Cardiac septum (tissue), 1 donor: ENCODE measurements at regions of chr15 and their contacts with region 1.

Region 1: DNA sequence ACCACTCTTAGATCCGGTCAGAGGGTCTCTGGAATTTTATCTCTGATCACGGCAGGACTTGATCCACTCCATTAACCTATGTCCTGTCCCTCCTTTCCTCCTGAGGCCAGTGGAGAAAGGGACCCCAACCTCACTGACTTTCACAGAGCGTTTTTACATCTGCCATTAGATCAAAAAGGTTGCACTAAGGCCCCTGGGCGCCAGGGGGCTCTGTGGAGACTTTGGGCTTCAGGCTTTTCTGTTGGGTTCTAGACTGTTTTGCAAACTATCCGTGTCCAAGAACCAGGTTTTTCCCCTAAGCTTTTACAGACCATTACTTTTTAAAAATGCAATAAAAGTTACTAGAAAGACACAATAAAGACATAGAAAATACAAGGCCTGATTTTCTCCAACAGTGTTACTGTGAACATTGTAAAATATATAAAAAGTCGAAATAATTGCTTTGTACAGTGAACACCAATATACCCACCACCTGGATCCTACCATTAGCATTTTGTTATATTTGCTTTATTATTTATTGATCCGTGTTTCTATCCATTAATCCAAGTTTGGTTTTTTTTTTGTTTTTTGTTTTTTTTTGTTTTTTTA is 159.7 kb downstream of the POLR2M start:
- DNase-seq: no peak

Region 2: DNA sequence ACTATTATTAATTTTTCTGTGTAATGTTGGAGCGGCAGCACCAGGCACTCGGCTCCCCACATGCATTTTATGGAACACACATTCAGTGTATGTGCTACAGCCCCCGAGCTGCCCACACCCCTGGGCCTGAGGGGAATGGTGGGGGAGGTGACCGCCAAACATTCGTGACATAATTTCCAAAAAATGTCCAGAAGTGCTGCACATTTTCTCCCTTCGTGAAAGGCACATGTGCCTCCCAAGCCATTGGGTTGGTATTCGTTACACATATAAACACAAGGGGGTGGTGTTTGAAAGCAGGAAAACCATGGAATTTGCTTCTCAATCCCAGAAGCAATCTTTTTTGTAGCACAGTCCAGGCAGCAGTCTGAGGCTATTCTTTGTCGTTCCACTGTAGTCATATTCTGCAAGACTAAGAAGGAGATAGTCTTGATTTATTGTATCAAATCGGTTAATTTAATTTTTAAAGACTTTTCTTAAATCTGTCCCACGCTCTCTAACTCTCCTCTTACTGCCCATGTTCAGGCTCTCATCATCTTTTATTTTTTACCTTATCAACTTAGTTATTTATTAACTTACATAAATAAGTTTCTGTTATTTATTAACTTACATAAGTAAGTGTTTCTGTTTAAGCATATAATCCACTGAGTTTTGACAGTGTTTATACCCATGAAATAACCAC is 198.9 kb before region 1 on chr15:
- intact Hi-C with region 1: loop called (anchors 10 kb)
- DNase-seq: no peak

Region 3: DNA sequence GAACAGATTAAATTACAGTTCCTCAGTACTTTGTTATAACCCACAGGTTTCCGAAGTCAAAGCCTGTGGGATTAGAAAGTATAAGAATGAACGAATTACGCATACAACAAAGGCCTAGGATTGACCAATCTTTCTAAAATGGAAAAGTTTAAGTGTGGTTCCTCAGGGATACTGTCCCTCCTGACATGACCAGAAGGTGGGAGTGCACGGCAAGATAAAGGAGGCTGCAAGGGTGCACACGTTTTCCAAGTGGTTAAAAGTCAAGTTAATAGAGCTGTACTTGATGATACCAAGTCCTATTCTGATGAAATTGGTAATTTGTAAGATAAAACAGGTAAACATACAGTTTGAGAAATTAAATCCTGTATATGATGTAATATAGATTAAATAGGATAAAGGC is 103.1 kb after region 1 on chr15:
- intact Hi-C with region 1: no loop called
- DNase-seq: no peak

Region 4: GRCh38 chr15:58066042-58066867 is 200.0 kb after region 1 on chr15:
- intact Hi-C with region 1: loop called (anchors 5 kb)
- DNase-seq: peak; percentile 87

Region 5: GRCh38 chr15:58182460-58183163 is 316.4 kb after region 1 on chr15:
- intact Hi-C with region 1: loop called (anchors 10 kb)
- DNase-seq: no peak